CD8-positive, alpha-beta T cell (primary cell): ENCODE measurements at regions of chr10 and their contacts with region 1.

Region 1: GRCh38 chr10:62437696-62438095 is 63.5 kb downstream of the ZNF365 start:
- DNase-seq: peak in 3 of 9 experiments; percentile 20 to 72 (median 65)
- ATAC-seq: peak; percentile 66
- H3K4me3 ChIP-seq: no peak overlapping the region
- H3K4me3 Mint-ChIP-seq: no peak overlapping the region
- H3K27ac ChIP-seq: no peak overlapping the region
- H3K27ac Mint-ChIP-seq: no peak overlapping the region
- H3K4me1 ChIP-seq: no peaks in the 10 kb centered on the region
- H3K4me1 Mint-ChIP-seq: no peaks in the 10 kb centered on the region
- H3K27me3 ChIP-seq: no peaks in the 10 kb centered on the region
- H3K27me3 Mint-ChIP-seq: peaks cover 6% of the 10 kb centered on the region
- CTCF ChIP-seq: peak; percentile 95

Region 2: GRCh38 chr10:62414359-62414758 is 23.3 kb before region 1 on chr10:
- CTCF ChIA-PET with region 1: no interaction called
- POLR2A ChIA-PET with region 1: no interaction called
- intact Hi-C with region 1: no loop called
- DNase-seq: peak in 2 of 9 experiments; percentile 2 to 13
- ATAC-seq: peak; percentile 36
- H3K4me3 ChIP-seq: no peak overlapping the region
- H3K4me3 Mint-ChIP-seq: no peak overlapping the region
- H3K27ac ChIP-seq: no peak overlapping the region
- H3K27ac Mint-ChIP-seq: no peak overlapping the region
- H3K4me1 ChIP-seq: no peaks in the 10 kb centered on the region
- H3K4me1 Mint-ChIP-seq: no peaks in the 10 kb centered on the region
- H3K27me3 ChIP-seq: no peaks in the 10 kb centered on the region
- H3K27me3 Mint-ChIP-seq: peaks cover 34% of the 10 kb centered on the region
- CTCF ChIP-seq: no peak

Region 3: DNA sequence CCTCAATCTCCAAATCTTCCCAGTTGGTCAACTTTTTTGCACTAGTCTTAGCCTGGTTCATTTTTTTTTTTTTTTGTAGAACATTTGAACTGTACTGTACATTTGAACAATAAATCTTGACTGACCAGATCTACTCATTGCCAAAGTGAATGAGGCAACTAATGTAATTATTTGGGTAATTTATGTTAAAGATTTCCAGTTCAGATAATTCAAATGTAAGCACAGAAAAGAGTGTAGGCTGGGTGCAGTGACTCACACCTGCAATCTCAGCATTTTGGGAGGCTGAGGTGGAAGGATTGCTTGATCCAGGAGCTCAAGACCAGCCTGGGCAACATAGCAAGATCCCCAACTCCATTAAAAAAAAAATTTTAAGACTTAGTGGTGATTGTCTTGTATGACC is 12.1 kb after region 1 on chr10:
- CTCF ChIA-PET with region 1: interaction called, 30 read pairs
- POLR2A ChIA-PET with region 1: no interaction called
- intact Hi-C with region 1: no loop called
- DNase-seq: no peak
- ATAC-seq: no peak
- H3K4me3 ChIP-seq: no peak overlapping the region
- H3K4me3 Mint-ChIP-seq: no peak overlapping the region
- H3K27ac ChIP-seq: no peak overlapping the region
- H3K27ac Mint-ChIP-seq: no peak overlapping the region
- H3K4me1 ChIP-seq: no peaks in the 10 kb centered on the region
- H3K4me1 Mint-ChIP-seq: no peaks in the 10 kb centered on the region
- H3K27me3 ChIP-seq: no peaks in the 10 kb centered on the region
- H3K27me3 Mint-ChIP-seq: peaks cover 26% of the 10 kb centered on the region
- CTCF ChIP-seq: no peak

Region 4: GRCh38 chr10:62456611-62457101 is 19.0 kb after region 1 on chr10:
- CTCF ChIA-PET with region 1: interaction called, 13 read pairs
- POLR2A ChIA-PET with region 1: no interaction called
- intact Hi-C with region 1: no loop called
- DNase-seq: peak in 2 of 9 experiments; percentile 7 to 30
- ATAC-seq: no peak
- H3K4me3 ChIP-seq: no peak overlapping the region
- H3K4me3 Mint-ChIP-seq: no peak overlapping the region
- H3K27ac ChIP-seq: no peak overlapping the region
- H3K27ac Mint-ChIP-seq: no peak overlapping the region
- H3K4me1 ChIP-seq: peaks cover 5% of the 10 kb centered on the region
- H3K4me1 Mint-ChIP-seq: peaks cover 15% of the 10 kb centered on the region
- H3K27me3 ChIP-seq: no peaks in the 10 kb centered on the region
- H3K27me3 Mint-ChIP-seq: peaks cover 12% of the 10 kb centered on the region
- CTCF ChIP-seq: no peak

Region 5: DNA sequence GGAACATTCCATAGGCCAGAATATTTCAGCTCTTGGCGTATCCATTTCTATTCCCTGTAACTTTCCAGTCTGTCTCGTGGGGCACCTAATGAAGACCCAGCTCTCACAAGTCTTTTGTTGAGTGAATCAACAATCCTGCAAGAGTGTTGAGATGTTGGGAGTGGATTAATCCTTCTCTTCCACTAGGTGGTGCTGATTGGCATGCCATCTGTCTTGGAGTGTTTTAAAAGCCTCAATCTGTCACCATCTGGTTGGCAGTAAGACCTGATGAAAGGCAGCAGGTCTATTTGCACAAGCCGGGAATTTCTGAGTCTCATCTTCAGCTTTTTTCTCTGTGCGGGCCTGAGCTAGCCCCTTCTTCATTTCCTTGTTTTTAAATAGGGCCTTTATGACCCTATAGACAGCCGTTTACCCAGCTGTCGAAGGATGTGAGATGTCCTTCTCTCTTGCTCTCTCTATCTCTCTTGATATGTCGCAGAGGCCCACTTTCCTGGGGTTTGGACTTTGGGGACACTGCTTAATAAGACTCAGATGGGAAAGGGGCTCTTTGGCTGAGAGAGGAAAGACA is 117.0 kb after region 1 on chr10:
- CTCF ChIA-PET with region 1: interaction called, 10 read pairs
- POLR2A ChIA-PET with region 1: no interaction called
- intact Hi-C with region 1: no loop called
- DNase-seq: peak in 3 of 9 experiments; percentile 19 to 55 (median 34)
- ATAC-seq: no peak
- H3K4me3 ChIP-seq: no peak overlapping the region
- H3K4me3 Mint-ChIP-seq: no peak overlapping the region
- H3K27ac ChIP-seq: no peak overlapping the region
- H3K27ac Mint-ChIP-seq: no peak overlapping the region
- H3K4me1 ChIP-seq: no peaks in the 10 kb centered on the region
- H3K4me1 Mint-ChIP-seq: no peaks in the 10 kb centered on the region
- H3K27me3 ChIP-seq: no peaks in the 10 kb centered on the region
- H3K27me3 Mint-ChIP-seq: peaks cover 15% of the 10 kb centered on the region
- CTCF ChIP-seq: peak; percentile 41

Region 6: DNA sequence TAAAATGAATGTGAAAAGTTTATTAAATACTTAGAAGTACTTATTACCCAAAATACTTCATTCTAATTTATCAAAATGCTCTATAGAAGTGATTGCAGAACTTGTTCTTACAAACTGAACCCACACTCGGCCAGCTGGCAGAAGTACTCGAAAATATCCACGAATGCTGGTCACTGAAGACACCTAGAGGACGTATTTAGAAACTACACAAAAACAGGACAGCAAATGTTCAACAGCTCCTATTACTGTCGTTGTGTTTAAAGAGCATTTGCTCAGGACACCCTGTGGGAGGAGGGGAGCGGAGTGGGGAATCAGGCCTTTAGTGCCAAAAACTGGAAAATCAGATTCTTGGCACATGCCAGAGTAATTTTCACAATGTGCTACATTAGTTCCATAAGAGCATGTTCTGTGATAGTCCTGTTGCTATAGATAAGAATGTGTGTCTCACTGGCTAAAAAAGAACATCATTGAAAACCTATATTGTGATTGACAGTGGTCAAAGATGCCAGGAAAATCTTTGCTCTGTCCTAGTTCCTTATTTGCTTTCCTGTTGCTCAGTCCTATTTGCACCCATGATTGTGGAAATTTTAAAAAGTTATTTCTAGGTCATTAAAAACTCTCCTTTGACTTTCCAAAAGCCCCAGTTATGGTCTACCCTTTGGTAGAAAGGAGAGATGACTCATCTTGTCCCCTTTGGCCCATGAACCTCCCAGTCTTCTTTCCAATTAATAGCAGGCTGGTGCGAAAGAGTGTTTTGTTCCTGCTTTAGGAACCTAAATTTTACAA is 646.4 kb after region 1 on chr10:
- CTCF ChIA-PET with region 1: interaction called, 27 read pairs
- POLR2A ChIA-PET with region 1: no interaction called
- intact Hi-C with region 1: loop called (anchors 1 kb)
- DNase-seq: peak in 8 of 9 experiments; percentile 7 to 76 (median 40)
- ATAC-seq: peak; percentile 51
- H3K4me3 ChIP-seq: no peak overlapping the region
- H3K4me3 Mint-ChIP-seq: no peak overlapping the region
- H3K27ac ChIP-seq: no peak overlapping the region
- H3K27ac Mint-ChIP-seq: no peak overlapping the region
- H3K4me1 ChIP-seq: no peaks in the 10 kb centered on the region
- H3K4me1 Mint-ChIP-seq: no peaks in the 10 kb centered on the region
- H3K27me3 ChIP-seq: no peaks in the 10 kb centered on the region
- H3K27me3 Mint-ChIP-seq: peaks cover 9% of the 10 kb centered on the region
- CTCF ChIP-seq: peak; percentile 77

Region 7: DNA sequence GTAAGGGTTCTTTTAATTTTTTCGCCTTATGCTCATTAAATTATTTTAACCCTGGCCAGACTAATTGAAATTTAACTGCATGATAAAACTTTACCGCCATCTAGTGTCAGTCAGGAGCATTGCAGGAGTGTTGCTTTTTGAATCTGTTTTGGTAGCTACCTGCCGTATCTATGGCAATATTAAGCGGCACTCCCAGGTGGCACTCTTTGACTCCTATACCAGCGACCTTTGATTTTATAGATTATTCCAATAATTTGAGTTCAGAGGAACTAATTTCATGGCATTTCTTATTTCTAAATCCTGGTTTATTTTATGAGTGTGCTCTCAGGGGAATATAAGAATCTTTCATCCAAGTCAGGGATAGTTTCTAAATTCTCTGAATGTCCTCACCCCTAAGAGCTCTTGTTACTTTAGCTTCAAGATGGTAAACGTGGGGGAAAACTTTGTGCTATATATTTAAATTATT is 1282.4 kb after region 1 on chr10:
- CTCF ChIA-PET with region 1: interaction called, 8 read pairs
- POLR2A ChIA-PET with region 1: no interaction called
- intact Hi-C with region 1: loop called in 1 of 2 experiments (anchors 5 kb)
- DNase-seq: peak; percentile 4 to 73 (median 46)
- ATAC-seq: peak; percentile 87
- H3K4me3 ChIP-seq: no peak overlapping the region
- H3K4me3 Mint-ChIP-seq: no peak overlapping the region
- H3K27ac ChIP-seq: no peak overlapping the region
- H3K27ac Mint-ChIP-seq: no peak overlapping the region
- H3K4me1 ChIP-seq: no peaks in the 10 kb centered on the region
- H3K4me1 Mint-ChIP-seq: peaks cover 4% of the 10 kb centered on the region
- H3K27me3 ChIP-seq: peaks cover 0 to 6% of the 10 kb centered on the region in 2 experiments
- H3K27me3 Mint-ChIP-seq: peaks cover 15% of the 10 kb centered on the region
- CTCF ChIP-seq: peak; percentile 100